PC-9 (cell line): ENCODE measurements at regions of chr3 and their contacts with region 1.

Region 1: DNA sequence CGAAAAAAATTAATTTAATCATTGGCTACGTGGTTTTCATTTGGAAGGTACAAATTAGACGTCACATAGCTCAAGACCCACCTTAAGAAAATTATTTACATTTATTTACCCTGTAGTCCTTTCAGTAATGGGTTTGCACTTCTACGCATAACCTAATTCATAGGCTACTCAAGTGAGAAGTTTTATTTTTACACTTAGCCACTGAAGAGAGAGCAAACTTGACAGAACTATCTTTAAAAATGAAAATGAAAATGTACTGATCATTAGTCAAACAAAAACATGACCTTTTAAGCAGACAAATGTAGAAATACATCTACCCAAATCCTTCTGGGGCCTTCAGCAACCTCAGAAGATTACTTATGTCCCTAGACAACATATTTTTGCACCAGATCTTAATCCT is 269.4 kb upstream of the TTC14 start:
- DNase-seq: no peak
- H3K4me3 ChIP-seq: no peak overlapping the region
- H3K27ac ChIP-seq: no peak overlapping the region
- H3K4me1 ChIP-seq: no peaks in the 10 kb centered on the region
- H3K27me3 ChIP-seq: no peaks in the 10 kb centered on the region
- CTCF ChIP-seq: no peak

Region 2: DNA sequence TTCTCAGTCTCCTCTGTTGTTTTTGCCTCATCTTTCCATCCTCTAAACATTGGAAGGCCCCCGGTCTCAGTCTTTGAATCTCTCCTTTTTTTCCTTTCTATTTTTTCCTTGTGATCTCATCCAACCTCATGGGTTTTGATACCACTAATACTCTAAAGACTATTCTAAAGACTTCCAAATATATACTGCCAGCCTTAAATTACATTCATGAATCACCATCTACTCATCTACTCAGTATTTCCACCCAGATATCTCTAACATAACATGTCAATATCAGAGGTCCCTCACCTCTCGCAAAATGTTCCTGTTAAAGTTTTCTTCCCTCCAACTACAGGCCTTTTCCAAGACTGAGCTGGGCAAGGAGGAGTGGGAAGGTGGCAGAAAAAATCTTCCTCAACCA is 13.1 kb before region 1 on chr3:
- CTCF ChIA-PET with region 1: no interaction called
- POLR2A ChIA-PET with region 1: no interaction called
- intact Hi-C with region 1: loop called (anchors 2 kb)
- DNase-seq: no peak
- H3K4me3 ChIP-seq: no peak overlapping the region
- H3K27ac ChIP-seq: no peak overlapping the region
- H3K4me1 ChIP-seq: no peaks in the 10 kb centered on the region
- H3K27me3 ChIP-seq: no peaks in the 10 kb centered on the region
- CTCF ChIP-seq: no peak

Region 3: DNA sequence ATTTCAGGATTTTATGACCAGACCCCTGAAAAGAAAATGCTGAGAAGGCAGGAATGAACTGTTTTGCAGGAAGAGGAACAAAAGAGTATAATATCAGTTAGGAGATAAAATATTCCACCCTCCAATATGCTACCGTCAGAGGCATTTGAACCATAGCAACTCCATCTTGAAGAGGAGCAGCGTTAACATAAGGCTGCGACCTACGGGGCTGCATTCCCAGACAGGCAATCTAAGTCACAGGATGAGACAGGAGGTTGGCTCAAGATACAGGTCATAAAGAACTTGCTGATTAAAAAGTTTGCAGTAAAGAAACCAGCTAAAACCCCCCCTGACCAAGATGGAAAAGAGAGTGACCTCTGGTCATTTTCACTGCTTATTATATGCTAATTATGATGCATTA is 323.8 kb after region 1 on chr3:
- CTCF ChIA-PET with region 1: no interaction called
- POLR2A ChIA-PET with region 1: no interaction called
- intact Hi-C with region 1: no loop called
- DNase-seq: no peak
- H3K4me3 ChIP-seq: no peak overlapping the region
- H3K27ac ChIP-seq: no peak overlapping the region
- H3K4me1 ChIP-seq: no peaks in the 10 kb centered on the region
- H3K27me3 ChIP-seq: no peaks in the 10 kb centered on the region
- CTCF ChIP-seq: no peak

Region 4: GRCh38 chr3:181030948-181031347 is 698.3 kb after region 1 on chr3:
- CTCF ChIA-PET with region 1: no interaction called
- POLR2A ChIA-PET with region 1: no interaction called
- intact Hi-C with region 1: no loop called
- DNase-seq: no peak
- H3K4me3 ChIP-seq: no peak overlapping the region
- H3K27ac ChIP-seq: no peak overlapping the region
- H3K4me1 ChIP-seq: no peaks in the 10 kb centered on the region
- H3K27me3 ChIP-seq: no peaks in the 10 kb centered on the region
- CTCF ChIP-seq: no peak